Endothelial cell of umbilical vein (primary cell): ENCODE measurements at regions of chr1 and their contacts with region 1.

Region 1: DNA sequence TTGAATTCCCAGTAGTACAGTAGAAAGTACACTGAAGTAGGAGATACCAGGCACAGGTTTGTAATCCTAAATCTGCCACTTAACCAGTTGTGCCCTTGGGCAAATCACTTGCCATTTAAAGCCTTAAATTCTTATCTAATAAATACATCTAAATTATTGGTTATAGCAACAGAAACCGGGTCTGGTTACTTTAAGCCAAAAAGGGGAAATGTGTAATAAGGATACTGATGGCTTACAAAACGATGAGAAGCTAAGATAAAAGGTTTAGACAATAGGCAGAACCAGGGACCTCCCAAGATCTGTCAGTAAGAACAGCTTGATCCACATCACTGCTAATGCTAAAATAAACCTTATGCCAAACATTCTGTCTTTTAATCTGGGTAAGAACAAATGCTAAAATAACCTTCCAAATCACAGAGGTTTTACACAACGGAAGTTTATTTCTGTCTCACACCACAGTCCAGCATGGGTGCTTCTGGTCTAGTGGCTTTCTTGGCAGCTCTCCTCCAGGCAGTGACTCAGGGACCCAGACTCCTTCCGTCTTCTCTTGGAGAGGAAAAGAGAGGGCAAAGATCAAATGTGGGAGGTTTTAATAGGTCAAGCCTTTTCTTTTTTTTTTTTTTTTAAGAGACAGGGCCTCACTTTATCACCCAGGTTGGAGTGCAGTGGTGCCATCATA is 16.5 kb upstream of the ZMYM1 start:
- DNase-seq: peak; percentile 87
- H3K4me3 ChIP-seq: no peak overlapping the region
- H3K27ac ChIP-seq: peak overlapping the region; percentile 57
- H3K4me1 ChIP-seq: peaks cover 18% of the 10 kb centered on the region
- H3K27me3 ChIP-seq: no peaks in the 10 kb centered on the region
- CTCF ChIP-seq: no peak
- POLR2A ChIP-seq: no peak

Region 2: DNA sequence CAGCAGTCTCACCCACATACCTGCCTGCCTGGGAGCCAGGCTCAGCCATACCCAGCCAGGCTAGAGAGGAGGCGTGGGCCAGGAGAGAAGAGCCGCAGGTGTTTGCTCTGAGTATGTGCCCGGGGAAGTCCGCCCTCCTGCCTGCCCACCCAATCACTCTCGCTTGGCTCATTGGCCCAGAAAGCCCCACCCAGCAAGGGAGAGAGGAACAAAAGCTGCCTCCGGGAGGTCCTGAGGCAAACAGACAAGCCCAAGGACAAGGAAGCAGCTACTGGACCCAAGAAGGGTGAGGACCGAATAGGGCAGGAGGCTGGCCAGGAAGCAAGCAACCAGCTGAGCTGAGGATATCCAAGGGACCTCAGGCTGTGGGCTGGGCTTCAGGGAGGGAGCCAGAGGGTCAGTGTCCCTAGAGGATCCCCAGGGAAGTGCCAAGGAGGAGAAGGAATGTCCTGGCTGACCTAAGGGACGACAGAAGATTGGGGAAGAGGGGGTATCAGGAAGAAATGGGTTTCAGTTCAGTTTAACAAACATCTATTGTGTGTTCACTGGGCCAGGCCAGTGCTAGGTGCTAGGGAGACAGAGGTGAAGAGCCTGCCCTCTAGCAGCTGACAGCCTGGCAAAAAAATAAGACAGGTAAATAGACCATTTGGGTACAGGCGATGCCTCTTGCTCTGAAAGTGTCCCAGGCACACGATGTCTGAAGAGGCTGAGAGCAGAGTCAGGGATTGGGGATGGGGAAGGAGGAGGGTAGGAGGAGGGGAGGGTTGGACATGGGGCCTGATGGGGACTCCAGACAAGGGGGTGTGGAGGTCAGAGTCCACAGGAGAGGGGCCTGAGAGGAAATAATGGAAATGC is 302.9 kb before region 1 on chr1 and contains the start of gene GJB4:
- CTCF ChIA-PET with region 1: no interaction called
- POLR2A ChIA-PET with region 1: no interaction called
- dilution Hi-C with region 1: no loop called
- intact Hi-C with region 1: no loop called
- DNase-seq: no peak
- H3K4me3 ChIP-seq: no peak within 1 kb of the TSS
- H3K27ac ChIP-seq: no peak within 1 kb of the TSS
- H3K4me1 ChIP-seq: no peaks in the 10 kb centered on the region
- H3K27me3 ChIP-seq: no peaks in the 10 kb centered on the region
- CTCF ChIP-seq: no peak
- POLR2A ChIP-seq: no peak
- total RNA-seq, gene GJB4: not detected in 2 replicates

Region 3: GRCh38 chr1:34885405-34886247 is 177.0 kb before region 1 on chr1:
- CTCF ChIA-PET with region 1: no interaction called
- POLR2A ChIA-PET with region 1: no interaction called
- dilution Hi-C with region 1: no loop called
- intact Hi-C with region 1: no loop called
- DNase-seq: peak; percentile 22
- H3K4me3 ChIP-seq: peak overlapping the region; percentile 15 to 31 (median 30)
- H3K27ac ChIP-seq: no peak overlapping the region
- H3K4me1 ChIP-seq: peaks cover 3% of the 10 kb centered on the region
- H3K27me3 ChIP-seq: peaks cover 24 to 25% of the 10 kb centered on the region in 2 experiments
- CTCF ChIP-seq: no peak
- POLR2A ChIP-seq: no peak

Region 4: DNA sequence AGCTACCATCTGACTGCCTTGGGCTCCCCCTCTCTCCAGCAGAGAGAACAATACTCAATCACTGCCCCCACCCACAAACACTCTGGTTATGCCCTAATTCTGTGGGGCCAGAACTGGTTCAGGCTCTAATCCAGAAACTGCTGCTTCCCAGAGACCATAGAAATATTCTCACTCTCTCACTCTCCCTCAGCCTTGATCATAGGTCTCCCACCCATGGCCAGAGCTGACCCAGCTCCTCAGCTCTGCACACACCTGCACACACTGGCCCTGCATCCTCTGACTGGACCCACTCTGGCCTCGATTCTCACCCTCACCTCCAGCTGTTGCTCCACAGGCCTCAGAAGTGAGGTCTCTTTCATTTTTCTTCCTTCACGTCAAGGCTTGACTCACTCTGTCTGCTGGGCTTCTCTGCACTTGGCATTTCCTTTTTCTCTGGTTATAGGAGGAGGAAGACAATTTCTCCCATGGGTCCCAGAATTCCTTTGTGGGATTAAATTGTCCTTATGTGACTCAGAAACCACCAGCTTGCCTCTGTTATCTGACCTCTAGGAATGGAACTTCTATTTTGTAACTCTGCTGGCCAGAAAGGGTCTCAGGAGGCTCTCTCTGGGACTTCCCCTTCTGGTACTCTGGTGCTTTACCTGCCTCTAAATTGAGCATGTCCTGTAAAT is 15.3 kb before region 1 on chr1:
- CTCF ChIA-PET with region 1: no interaction called
- POLR2A ChIA-PET with region 1: no interaction called
- dilution Hi-C with region 1: no loop called
- intact Hi-C with region 1: loop called (anchors 1 kb)
- DNase-seq: peak; percentile 74
- H3K4me3 ChIP-seq: no peak overlapping the region
- H3K27ac ChIP-seq: peak overlapping the region; percentile 55
- H3K4me1 ChIP-seq: peaks cover 10% of the 10 kb centered on the region
- H3K27me3 ChIP-seq: no peaks in the 10 kb centered on the region
- CTCF ChIP-seq: no peak
- POLR2A ChIP-seq: no peak

Region 5: GRCh38 chr1:35079003-35079930 is 16.6 kb after region 1 on chr1 and contains the start of gene ZMYM1:
- CTCF ChIA-PET with region 1: interaction called, 4 read pairs
- POLR2A ChIA-PET with region 1: no interaction called
- dilution Hi-C with region 1: no loop called
- intact Hi-C with region 1: loop called (anchors 1 kb)
- DNase-seq: peak; percentile 95
- H3K4me3 ChIP-seq: peak within 1 kb of the TSS; percentile 41 to 78 (median 74)
- H3K27ac ChIP-seq: peak within 1 kb of the TSS; percentile 60
- H3K4me1 ChIP-seq: peaks cover 12% of the 10 kb centered on the region
- H3K27me3 ChIP-seq: no peaks in the 10 kb centered on the region
- CTCF ChIP-seq: no peak
- POLR2A ChIP-seq: peak; percentile 84
- total RNA-seq, gene ZMYM1: 20.7 and 21.4 TPM in 2 replicates

Region 6: GRCh38 chr1:35231287-35231686 is 168.6 kb after region 1 on chr1:
- CTCF ChIA-PET with region 1: no interaction called
- POLR2A ChIA-PET with region 1: no interaction called
- dilution Hi-C with region 1: no loop called
- intact Hi-C with region 1: no loop called
- DNase-seq: no peak
- H3K4me3 ChIP-seq: no peak overlapping the region
- H3K27ac ChIP-seq: no peak overlapping the region
- H3K4me1 ChIP-seq: no peaks in the 10 kb centered on the region
- H3K27me3 ChIP-seq: peaks cover 0 to 8% of the 10 kb centered on the region in 2 experiments
- CTCF ChIP-seq: no peak
- POLR2A ChIP-seq: no peak